ENCODE measurements at regions of chr3 and their contacts with region 1.

Region 1: DNA sequence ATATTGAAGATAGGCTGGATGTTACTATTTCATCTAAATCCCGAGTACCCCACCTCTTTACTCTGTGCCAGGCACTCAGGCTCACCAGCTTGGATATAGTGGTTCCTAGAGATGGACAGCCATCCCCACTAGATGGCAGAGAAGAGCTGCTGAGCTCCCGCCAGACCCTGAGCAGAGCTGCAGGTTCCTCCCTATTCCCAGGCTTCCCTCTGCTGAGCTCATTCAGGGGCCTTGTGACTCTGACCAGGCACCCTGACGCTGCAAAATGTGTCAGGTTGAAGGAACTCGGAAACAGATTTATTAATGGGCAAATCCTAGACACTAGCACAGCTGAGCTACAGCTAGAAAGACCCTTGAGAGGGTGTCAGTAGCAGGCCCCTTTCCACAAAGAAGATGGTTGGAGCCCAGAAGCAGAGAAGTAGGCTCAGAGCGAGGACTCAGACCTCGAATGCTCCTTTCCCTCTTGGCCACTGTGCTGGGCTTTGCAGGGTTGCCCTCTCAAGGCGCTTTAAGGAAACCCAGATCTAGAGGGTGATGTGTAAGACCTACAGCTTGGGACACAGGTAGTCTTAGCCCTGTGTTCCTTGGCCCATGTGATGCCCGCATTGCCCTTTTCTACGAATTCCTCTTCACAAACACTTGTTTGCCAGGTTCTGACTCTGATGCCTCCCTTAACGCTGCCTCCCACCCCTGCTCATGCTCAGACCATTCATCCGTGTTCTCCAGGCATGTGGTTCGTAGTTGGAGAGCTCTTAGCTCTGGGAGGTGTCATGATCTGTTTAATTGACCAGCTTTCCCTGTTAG is 38.0 kb upstream of the RHO start:
- DNase-seq: peak in 8 of 9 donors; percentile 16 to 56 (median 40)
- ATAC-seq: peak; percentile 91
- H3K4me3 ChIP-seq: no peak overlapping the region
- H3K4me3 Mint-ChIP-seq: no peak overlapping the region
- H3K27ac ChIP-seq: no peak overlapping the region
- H3K27ac Mint-ChIP-seq: no peak overlapping the region
- H3K4me1 ChIP-seq: no peaks in the 10 kb centered on the region
- H3K4me1 Mint-ChIP-seq: peaks cover 0 to 3% (median 0%) of the 10 kb centered on the region in 7 donors
- H3K27me3 ChIP-seq: no peaks in the 10 kb centered on the region
- H3K27me3 Mint-ChIP-seq: no peaks in the 10 kb centered on the region

Region 2: GRCh38 chr3:129336093-129336709 is 154.2 kb before region 1 on chr3:
- CTCF ChIA-PET with region 1: no interaction called
- POLR2A ChIA-PET with region 1: no interaction called
- intact Hi-C with region 1: no loop called
- DNase-seq: no peak
- ATAC-seq: no peak
- H3K4me3 ChIP-seq: no peak overlapping the region
- H3K4me3 Mint-ChIP-seq: no peak overlapping the region
- H3K27ac ChIP-seq: no peak overlapping the region
- H3K27ac Mint-ChIP-seq: no peak overlapping the region
- H3K4me1 ChIP-seq: no peaks in the 10 kb centered on the region
- H3K4me1 Mint-ChIP-seq: peaks cover 0 to 6% (median 0%) of the 10 kb centered on the region in 7 donors
- H3K27me3 ChIP-seq: no peaks in the 10 kb centered on the region
- H3K27me3 Mint-ChIP-seq: peaks cover 0 to 3% (median 0%) of the 10 kb centered on the region in 5 donors

Region 3: GRCh38 chr3:129521611-129522010 is 31.2 kb after region 1 on chr3:
- CTCF ChIA-PET with region 1: no interaction called
- POLR2A ChIA-PET with region 1: no interaction called
- intact Hi-C with region 1: no loop called
- DNase-seq: no peak
- ATAC-seq: no peak
- H3K4me3 ChIP-seq: no peak overlapping the region
- H3K4me3 Mint-ChIP-seq: no peak overlapping the region
- H3K27ac ChIP-seq: no peak overlapping the region
- H3K27ac Mint-ChIP-seq: peak overlapping the region in 1 of 9 donors; percentile 46
- H3K4me1 ChIP-seq: no peaks in the 10 kb centered on the region
- H3K4me1 Mint-ChIP-seq: peaks cover 0 to 2% (median 0%) of the 10 kb centered on the region in 7 donors
- H3K27me3 ChIP-seq: no peaks in the 10 kb centered on the region
- H3K27me3 Mint-ChIP-seq: no peaks in the 10 kb centered on the region

Region 4: GRCh38 chr3:129560269-129560787 is 69.9 kb after region 1 on chr3:
- CTCF ChIA-PET with region 1: no interaction called
- POLR2A ChIA-PET with region 1: no interaction called
- intact Hi-C with region 1: no loop called
- DNase-seq: no peak
- ATAC-seq: no peak
- H3K4me3 ChIP-seq: no peak overlapping the region
- H3K4me3 Mint-ChIP-seq: no peak overlapping the region
- H3K27ac ChIP-seq: no peak overlapping the region
- H3K27ac Mint-ChIP-seq: peak overlapping the region in 2 of 9 donors; percentile 1 to 19
- H3K4me1 ChIP-seq: peaks cover 0 to 21% of the 10 kb centered on the region in 2 donors
- H3K4me1 Mint-ChIP-seq: peaks cover 0 to 11% (median 7%) of the 10 kb centered on the region in 7 donors
- H3K27me3 ChIP-seq: no peaks in the 10 kb centered on the region
- H3K27me3 Mint-ChIP-seq: peaks cover 0 to 3% (median 0%) of the 10 kb centered on the region in 5 donors

Region 5: DNA sequence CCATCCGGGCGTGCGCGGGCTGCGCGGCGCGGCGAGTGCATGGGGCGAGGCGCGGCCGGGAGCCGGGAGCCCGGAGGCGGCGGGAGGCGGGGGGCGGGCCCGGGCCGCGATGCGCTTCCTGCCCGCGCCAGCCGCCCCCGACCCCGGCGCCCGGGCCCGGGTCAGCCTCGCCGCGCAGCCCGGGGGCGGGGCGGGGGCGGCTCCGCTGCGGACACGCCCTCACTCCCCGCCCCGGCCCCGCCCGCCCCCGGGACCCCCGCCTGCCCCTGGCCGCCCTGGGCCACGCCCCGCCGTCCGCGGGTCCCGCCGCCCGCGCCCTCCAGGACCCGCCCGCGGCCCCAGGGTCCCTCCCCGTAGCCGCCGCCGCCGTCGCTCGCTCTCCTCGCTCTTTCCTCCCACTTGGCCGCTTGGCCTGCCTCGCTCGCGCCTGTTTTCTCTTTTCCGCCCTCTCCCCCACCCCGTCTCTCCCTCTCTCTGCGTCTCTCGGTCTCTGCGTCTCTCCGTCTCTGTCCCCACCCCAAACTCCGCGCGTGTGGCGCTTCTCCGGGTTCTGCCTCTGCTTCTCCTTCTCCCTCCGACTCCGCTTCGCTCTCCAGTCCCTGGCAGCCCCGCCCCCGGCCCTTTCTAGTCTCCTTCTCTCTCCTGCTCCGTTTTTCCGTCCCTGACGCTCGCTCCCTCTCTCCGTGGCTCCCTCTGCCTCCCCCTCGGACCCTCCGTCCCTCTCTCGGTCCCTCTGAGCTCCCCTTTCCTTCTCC is 116.4 kb after region 1 on chr3 and contains the start of gene PLXND1:
- CTCF ChIA-PET with region 1: interaction called, 3 read pairs
- POLR2A ChIA-PET with region 1: no interaction called
- intact Hi-C with region 1: loop called (anchors 1 to 10 kb)
- DNase-seq: peak in 5 of 9 donors; percentile 14 to 49 (median 25)
- ATAC-seq: peak; percentile 76
- H3K4me3 ChIP-seq: peak within 1 kb of the TSS; percentile 53
- H3K4me3 Mint-ChIP-seq: peak within 1 kb of the TSS; percentile 89 to 98 (median 93)
- H3K27ac ChIP-seq: peak within 1 kb of the TSS; percentile 51
- H3K27ac Mint-ChIP-seq: peak within 1 kb of the TSS; percentile 35 to 92 (median 84)
- H3K4me1 ChIP-seq: peaks cover 0 to 6% of the 10 kb centered on the region in 2 donors
- H3K4me1 Mint-ChIP-seq: peaks cover 11 to 25% (median 14%) of the 10 kb centered on the region in 7 donors
- H3K27me3 ChIP-seq: peaks cover 0 to 6% of the 10 kb centered on the region in 2 donors
- H3K27me3 Mint-ChIP-seq: peaks cover 8 to 64% (median 11%) of the 10 kb centered on the region in 5 donors
- total RNA-seq, gene PLXND1: 1.9 to 82.5 (median 7.5) TPM

Region 6: DNA sequence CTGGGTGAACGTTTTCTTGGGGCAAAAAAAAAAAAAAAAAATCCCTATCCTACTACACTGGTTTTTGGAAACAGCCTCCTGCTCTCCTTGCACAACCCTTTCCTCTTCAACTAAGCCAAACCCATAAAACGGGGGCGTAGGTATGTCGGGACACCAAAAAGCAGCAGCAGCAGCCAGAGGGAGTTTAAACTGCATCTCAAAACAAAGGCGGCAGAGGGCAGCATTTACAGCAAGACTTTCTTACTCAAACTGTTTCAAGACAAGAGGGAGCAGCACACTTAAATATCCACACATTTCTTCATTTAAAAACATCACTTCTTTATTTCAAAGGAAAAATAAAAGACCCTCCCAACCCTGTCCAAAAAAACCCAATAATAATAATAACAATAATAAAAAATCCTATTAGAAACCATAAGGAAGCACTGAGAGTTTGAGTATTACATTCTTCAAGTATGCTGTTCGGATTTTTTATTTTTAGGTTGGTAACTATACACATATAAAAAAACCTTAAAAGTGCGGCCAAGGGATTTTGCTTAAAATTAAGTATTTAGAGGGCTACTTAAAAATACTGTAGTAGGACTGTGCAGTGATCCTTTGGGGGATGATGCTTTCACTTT is 159.9 kb after region 1 on chr3:
- CTCF ChIA-PET with region 1: no interaction called
- POLR2A ChIA-PET with region 1: no interaction called
- intact Hi-C with region 1: loop called (anchors 1 to 2 kb)
- DNase-seq: peak in 8 of 9 donors; percentile 8 to 57 (median 42)
- ATAC-seq: peak; percentile 62
- H3K4me3 ChIP-seq: no peak overlapping the region
- H3K4me3 Mint-ChIP-seq: no peak overlapping the region
- H3K27ac ChIP-seq: no peak overlapping the region
- H3K27ac Mint-ChIP-seq: peak overlapping the region in 2 of 9 donors; percentile 12 to 38
- H3K4me1 ChIP-seq: no peaks in the 10 kb centered on the region
- H3K4me1 Mint-ChIP-seq: peaks cover 0 to 4% (median 1%) of the 10 kb centered on the region in 7 donors
- H3K27me3 ChIP-seq: no peaks in the 10 kb centered on the region
- H3K27me3 Mint-ChIP-seq: peaks cover 0 to 4% (median 0%) of the 10 kb centered on the region in 5 donors

Region 7: DNA sequence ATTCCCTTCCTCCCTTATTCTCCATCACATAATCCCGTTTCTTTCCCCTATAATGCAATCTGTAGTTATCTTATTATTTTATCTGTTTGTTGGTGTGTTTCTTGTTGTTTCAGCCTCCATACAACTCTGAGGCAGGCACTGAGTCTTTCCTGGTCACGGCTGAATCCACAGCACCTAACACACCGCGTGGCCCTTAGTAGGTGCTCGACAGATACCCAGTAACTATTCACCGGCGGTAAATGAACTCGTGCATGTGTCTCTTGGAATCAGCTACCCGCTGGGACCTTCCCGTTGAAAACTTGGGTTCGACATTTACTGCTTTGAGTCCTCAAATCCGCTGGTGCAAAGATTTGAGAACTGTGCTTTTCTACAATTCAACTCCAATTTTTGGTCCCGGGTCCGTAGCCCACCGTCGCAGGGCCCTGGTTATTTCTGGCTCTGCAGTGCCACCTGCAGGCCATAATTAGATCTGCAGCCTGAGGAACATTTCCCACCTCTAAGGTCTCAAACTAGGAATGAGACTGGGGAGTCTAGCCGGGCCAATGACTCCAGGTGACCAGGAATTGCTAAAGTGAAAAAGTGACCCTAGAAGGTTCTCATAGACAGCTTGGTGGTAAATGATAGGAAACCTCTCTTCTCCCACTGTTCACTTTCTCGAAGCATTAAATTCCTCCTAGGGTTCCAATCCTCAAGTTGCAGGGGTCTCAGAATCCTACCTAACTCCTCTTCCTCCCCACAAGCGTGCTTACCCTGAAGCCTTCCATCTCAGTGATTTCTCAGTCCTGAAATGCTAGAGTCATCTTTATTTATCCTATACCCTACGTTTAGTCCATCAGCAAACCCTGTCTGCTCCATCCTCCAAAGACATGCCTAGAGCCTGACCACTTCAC is 444.0 kb after region 1 on chr3:
- CTCF ChIA-PET with region 1: interaction called, 4 read pairs
- POLR2A ChIA-PET with region 1: no interaction called
- intact Hi-C with region 1: loop called (anchors 1 kb)
- DNase-seq: peak in 6 of 9 donors; percentile 18 to 46 (median 26)
- ATAC-seq: peak; percentile 66
- H3K4me3 ChIP-seq: no peak overlapping the region
- H3K4me3 Mint-ChIP-seq: peak overlapping the region in 4 of 10 donors; percentile 10 to 67 (median 27)
- H3K27ac ChIP-seq: no peak overlapping the region
- H3K27ac Mint-ChIP-seq: no peak overlapping the region
- H3K4me1 ChIP-seq: peaks cover 0 to 3% of the 10 kb centered on the region in 2 donors
- H3K4me1 Mint-ChIP-seq: peaks cover 4 to 10% (median 7%) of the 10 kb centered on the region in 7 donors
- H3K27me3 ChIP-seq: no peaks in the 10 kb centered on the region
- H3K27me3 Mint-ChIP-seq: peaks cover 3 to 16% (median 4%) of the 10 kb centered on the region in 5 donors

Region 8: DNA sequence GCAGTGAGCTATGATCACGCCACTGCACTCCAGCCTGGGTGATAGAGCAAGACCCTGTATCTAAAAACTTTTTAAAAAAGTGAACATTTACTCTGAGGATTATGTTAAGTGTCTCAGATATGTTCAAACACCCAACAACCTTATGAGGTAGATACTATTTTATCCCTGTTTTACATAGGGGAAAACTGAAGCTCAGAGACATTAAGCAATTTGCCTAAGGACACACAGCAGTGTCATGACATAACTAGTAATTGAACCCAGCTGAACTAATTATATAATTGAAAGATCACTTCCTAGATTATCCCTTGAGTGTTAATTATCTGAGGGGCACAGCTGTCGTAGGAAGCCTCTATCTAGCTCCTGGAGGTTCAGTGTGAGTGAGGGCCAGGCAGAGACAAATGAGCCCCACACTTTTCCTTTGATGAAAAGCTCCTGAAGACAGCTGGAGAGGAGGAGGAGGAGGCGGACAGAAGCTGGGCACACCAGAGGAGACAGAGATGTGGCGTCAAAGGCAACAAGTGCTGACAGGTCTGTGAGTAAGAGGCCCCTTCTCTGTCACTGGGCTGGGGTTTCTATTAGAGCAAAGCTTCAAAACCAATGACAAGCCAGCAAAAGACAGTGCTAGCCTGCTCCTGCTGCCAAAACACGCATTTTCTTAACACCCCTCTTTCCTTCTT is 504.6 kb after region 1 on chr3:
- CTCF ChIA-PET with region 1: no interaction called
- POLR2A ChIA-PET with region 1: no interaction called
- intact Hi-C with region 1: loop called in 1 of 2 experiments (anchors 5 kb)
- DNase-seq: no peak
- ATAC-seq: no peak
- H3K4me3 ChIP-seq: no peak overlapping the region
- H3K4me3 Mint-ChIP-seq: no peak overlapping the region
- H3K27ac ChIP-seq: no peak overlapping the region
- H3K27ac Mint-ChIP-seq: no peak overlapping the region
- H3K4me1 ChIP-seq: no peaks in the 10 kb centered on the region
- H3K4me1 Mint-ChIP-seq: no peaks in the 10 kb centered on the region
- H3K27me3 ChIP-seq: no peaks in the 10 kb centered on the region
- H3K27me3 Mint-ChIP-seq: peaks cover 9 to 26% (median 23%) of the 10 kb centered on the region in 5 donors

Measured in naive thymus-derived CD4-positive, alpha-beta T cell (primary cell).